Natural killer cell (primary cell): ENCODE measurements at regions of chr7 and their contacts with region 1.

Region 1: DNA sequence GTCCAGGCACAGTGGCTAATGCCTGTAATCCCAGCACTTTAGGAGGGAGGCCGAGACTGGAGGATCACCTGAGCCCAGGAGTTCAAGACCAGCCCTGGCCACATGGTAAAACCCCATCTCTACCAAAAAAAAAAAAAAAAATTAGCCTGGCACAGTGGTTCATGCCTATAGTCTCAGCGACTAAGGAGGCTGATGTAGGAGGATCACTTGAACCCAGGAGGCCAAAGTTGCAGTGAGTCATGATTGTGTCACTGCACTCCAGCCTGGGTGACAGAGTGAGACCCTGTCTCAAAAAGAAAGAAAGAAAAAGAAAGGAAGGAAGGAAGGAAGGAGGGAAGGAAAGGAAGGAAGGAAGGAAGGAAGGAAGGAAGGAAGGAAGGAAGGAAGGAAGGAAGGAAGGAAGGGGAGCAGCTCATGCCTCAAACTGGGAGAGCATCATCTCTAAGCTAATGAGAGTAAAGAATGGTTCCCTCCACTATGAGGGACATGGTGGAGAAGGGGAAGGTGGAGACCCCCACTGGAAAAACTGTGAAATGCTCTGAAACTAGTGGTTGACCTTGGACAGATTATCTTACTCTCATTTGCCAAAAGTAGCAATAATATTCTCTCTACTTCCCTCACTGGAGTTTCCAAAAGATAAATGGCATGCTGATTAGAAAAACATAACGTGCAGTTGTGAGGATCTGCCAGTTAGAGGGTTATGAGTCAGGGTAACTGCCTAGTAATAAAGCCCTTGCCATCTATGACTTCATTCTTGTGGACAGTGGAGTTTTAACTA is 16.8 kb downstream of the GIMAP5 start:
- DNase-seq: peak in 1 of 2 donors; percentile 69
- ATAC-seq: peak in 2 of 3 donors; percentile 43 to 55
- H3K4me3 ChIP-seq: no peak overlapping the region
- H3K4me3 Mint-ChIP-seq: peak overlapping the region; percentile 62
- H3K27ac ChIP-seq: peak overlapping the region; percentile 71
- H3K27ac Mint-ChIP-seq: peak overlapping the region; percentile 87 to 89
- H3K4me1 ChIP-seq: peaks cover 39% of the 10 kb centered on the region
- H3K4me1 Mint-ChIP-seq: peaks cover 49 to 60% of the 10 kb centered on the region in 2 donors
- H3K27me3 ChIP-seq: no peaks in the 10 kb centered on the region
- H3K27me3 Mint-ChIP-seq: no peaks in the 10 kb centered on the region
- CTCF ChIP-seq: no peak

Region 2: DNA sequence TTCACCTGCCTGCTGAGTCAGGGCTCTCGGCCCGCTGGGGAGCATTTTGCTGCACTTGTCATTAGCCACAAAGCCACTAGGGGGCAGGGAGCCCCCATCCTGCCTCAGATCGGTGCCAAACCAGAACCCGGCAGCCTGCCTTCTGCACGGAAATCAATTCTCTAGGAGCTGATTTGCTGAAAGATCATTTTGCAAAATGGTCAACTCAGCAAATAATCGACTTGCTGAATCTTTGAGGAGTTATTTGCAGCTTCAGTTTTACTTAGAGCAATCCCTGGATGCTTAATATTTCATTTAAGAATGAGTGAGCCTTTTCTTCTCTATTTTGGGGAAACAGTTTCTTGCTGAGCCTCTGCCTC is 305.2 kb before region 1 on chr7:
- intact Hi-C with region 1: loop called (anchors 1 kb)
- DNase-seq: peak; percentile 78 to 95
- ATAC-seq: peak; percentile 69 to 76 (median 72)
- H3K4me3 ChIP-seq: no peak overlapping the region
- H3K4me3 Mint-ChIP-seq: peak overlapping the region; percentile 96
- H3K27ac ChIP-seq: peak overlapping the region; percentile 89
- H3K27ac Mint-ChIP-seq: peak overlapping the region; percentile 92 to 97
- H3K4me1 ChIP-seq: peaks cover 68% of the 10 kb centered on the region
- H3K4me1 Mint-ChIP-seq: peaks cover 53 to 65% of the 10 kb centered on the region in 2 donors
- H3K27me3 ChIP-seq: no peaks in the 10 kb centered on the region
- H3K27me3 Mint-ChIP-seq: no peaks in the 10 kb centered on the region
- CTCF ChIP-seq: peak; percentile 93

Region 3: DNA sequence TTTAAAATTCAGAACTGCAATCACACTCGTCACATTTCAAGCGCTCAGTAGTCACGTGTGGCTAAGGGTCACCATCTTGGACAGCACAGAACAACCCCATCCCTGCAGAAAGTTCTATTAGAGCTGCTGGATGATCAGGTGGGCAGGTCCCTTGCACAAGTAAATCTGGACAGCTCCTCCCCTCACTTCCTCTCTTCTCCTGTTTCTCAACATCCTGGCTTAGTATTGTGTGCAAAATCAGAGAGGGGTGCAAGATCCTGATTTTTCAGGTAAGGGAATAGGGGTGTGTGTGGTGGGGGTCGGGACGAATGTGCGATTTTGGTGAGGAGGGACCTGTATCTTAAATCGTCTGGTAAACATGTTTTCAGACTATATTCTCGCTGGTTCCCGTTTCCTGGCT is 186.8 kb before region 1 on chr7 and contains the start of gene GIMAP4:
- intact Hi-C with region 1: loop called (anchors 5 kb)
- DNase-seq: peak in 1 of 2 donors; percentile 66
- ATAC-seq: peak; percentile 52 to 63 (median 58)
- H3K4me3 ChIP-seq: peak within 1 kb of the TSS; percentile 72
- H3K4me3 Mint-ChIP-seq: peak within 1 kb of the TSS; percentile 96
- H3K27ac ChIP-seq: peak within 1 kb of the TSS; percentile 66
- H3K27ac Mint-ChIP-seq: peak within 1 kb of the TSS; percentile 90 to 95
- H3K4me1 ChIP-seq: peaks cover 52% of the 10 kb centered on the region
- H3K4me1 Mint-ChIP-seq: peaks cover 69 to 80% of the 10 kb centered on the region in 2 donors
- H3K27me3 ChIP-seq: no peaks in the 10 kb centered on the region
- H3K27me3 Mint-ChIP-seq: no peaks in the 10 kb centered on the region
- CTCF ChIP-seq: no peak
- total RNA-seq, gene GIMAP4: 105 to 215 (median 124) TPM

Region 4: DNA sequence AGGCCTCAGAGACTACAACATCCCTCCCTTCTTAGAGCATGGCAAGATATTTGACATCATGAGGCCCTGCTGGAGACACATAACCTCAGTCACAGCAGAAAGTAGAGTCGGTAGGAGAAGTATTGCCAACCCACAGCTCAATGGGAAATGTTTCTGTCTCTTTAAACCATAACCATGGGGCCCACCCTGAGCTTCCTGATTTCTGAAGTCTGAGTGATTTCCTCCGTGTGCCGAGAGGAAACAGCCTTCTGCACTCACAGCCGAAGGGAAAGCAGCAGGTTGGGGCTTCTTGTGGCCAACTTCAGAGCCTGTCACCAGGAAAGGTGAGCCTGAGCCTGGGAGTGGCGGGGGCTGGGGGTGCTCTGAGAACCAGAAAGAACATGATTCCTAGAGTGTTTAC is 37.6 kb before region 1 on chr7 and contains the start of gene GIMAP1:
- intact Hi-C with region 1: loop called (anchors 5 kb)
- DNase-seq: peak; percentile 27 to 83
- ATAC-seq: peak; percentile 73 to 79 (median 79)
- H3K4me3 ChIP-seq: peak within 1 kb of the TSS; percentile 71
- H3K4me3 Mint-ChIP-seq: peak within 1 kb of the TSS; percentile 87
- H3K27ac ChIP-seq: peak within 1 kb of the TSS; percentile 79
- H3K27ac Mint-ChIP-seq: peak within 1 kb of the TSS; percentile 92 to 93
- H3K4me1 ChIP-seq: peaks cover 46% of the 10 kb centered on the region
- H3K4me1 Mint-ChIP-seq: peaks cover 71 to 76% of the 10 kb centered on the region in 2 donors
- H3K27me3 ChIP-seq: no peaks in the 10 kb centered on the region
- H3K27me3 Mint-ChIP-seq: no peaks in the 10 kb centered on the region
- CTCF ChIP-seq: no peak
- total RNA-seq, gene GIMAP1: 11.1 to 23.9 (median 13.3) TPM